ENCODE measurements at regions of chr15 and their contacts with region 1.

Region 1: DNA sequence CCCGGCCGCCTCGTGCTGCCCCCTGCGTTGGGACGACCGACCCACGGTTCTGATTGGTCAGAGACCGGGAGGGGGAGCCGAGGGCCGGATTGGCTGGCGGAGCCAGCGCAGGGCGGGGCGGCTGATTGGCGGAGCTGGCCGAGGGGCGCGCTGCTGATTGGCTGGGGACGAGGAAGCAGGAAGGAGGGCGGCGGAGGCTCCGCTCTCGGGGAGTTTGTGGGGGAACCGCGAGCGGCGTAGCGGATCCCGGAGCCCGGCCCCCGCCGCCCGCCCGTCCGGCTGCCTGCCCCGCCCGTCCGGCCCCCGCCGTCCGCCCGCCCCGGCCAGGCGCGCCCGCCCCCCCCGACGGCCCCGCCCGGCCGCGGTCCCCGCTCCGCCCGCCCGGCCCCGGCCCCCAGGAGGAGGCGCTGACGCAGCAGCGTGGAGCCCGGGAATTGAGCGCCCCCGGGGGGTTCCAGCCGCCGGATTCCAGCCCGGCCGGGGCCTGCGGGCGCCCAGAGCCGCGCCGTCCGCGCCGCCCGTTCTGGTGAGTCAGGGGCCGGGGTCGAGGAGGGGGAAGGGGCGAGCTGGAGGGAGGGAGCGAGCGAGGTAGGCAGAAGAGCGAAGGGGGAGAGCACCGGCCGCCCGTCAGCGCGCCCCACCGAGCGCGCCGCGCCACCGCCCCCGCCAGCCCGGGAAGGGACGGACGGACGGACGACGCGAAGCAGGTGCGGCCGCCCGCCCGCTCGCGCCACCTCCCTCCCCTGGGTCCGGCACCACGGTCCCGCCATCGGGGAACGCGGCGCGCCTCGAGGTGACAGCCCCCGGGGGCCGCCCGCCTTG is at the start of gene BAHD1:
- DNase-seq: peak; percentile 85 to 97 (median 89)
- ATAC-seq: peak; percentile 94
- H3K4me3 ChIP-seq: peak within 1 kb of the TSS; percentile 60
- H3K4me3 Mint-ChIP-seq: peak within 1 kb of the TSS; percentile 88 to 99 (median 94)
- H3K27ac ChIP-seq: peak within 1 kb of the TSS; percentile 77
- H3K27ac Mint-ChIP-seq: peak within 1 kb of the TSS in 8 of 9 donors; percentile 71 to 93 (median 84)
- H3K4me1 ChIP-seq: peaks cover 20 to 44% of the 10 kb centered on the region in 2 donors
- H3K4me1 Mint-ChIP-seq: peaks cover 46 to 64% (median 60%) of the 10 kb centered on the region in 7 donors
- H3K27me3 ChIP-seq: peaks cover 0 to 5% of the 10 kb centered on the region in 2 donors
- H3K27me3 Mint-ChIP-seq: peaks cover 15 to 65% (median 22%) of the 10 kb centered on the region in 5 donors
- total RNA-seq, gene BAHD1: 28.4 to 48.8 (median 31.2) TPM

Region 2: GRCh38 chr15:40382580-40383456 is 58.1 kb before region 1 on chr15 and contains the start of gene KNSTRN:
- CTCF ChIA-PET with region 1: no interaction called
- POLR2A ChIA-PET with region 1: interaction called, 4 read pairs
- intact Hi-C with region 1: loop called in 1 of 2 experiments (anchors 2 kb)
- DNase-seq: peak; percentile 78 to 93 (median 91)
- ATAC-seq: peak; percentile 100
- H3K4me3 ChIP-seq: peak within 1 kb of the TSS; percentile 70
- H3K4me3 Mint-ChIP-seq: peak within 1 kb of the TSS; percentile 92 to 99 (median 98)
- H3K27ac ChIP-seq: peak within 1 kb of the TSS; percentile 65
- H3K27ac Mint-ChIP-seq: peak within 1 kb of the TSS; percentile 63 to 95 (median 85)
- H3K4me1 ChIP-seq: peaks cover 6 to 7% of the 10 kb centered on the region in 2 donors
- H3K4me1 Mint-ChIP-seq: peaks cover 14 to 26% (median 22%) of the 10 kb centered on the region in 7 donors
- H3K27me3 ChIP-seq: no peaks in the 10 kb centered on the region
- H3K27me3 Mint-ChIP-seq: peaks cover 0 to 13% (median 0%) of the 10 kb centered on the region in 5 donors
- total RNA-seq, gene KNSTRN: 3.7 to 39.6 (median 6.2) TPM

Region 3: DNA sequence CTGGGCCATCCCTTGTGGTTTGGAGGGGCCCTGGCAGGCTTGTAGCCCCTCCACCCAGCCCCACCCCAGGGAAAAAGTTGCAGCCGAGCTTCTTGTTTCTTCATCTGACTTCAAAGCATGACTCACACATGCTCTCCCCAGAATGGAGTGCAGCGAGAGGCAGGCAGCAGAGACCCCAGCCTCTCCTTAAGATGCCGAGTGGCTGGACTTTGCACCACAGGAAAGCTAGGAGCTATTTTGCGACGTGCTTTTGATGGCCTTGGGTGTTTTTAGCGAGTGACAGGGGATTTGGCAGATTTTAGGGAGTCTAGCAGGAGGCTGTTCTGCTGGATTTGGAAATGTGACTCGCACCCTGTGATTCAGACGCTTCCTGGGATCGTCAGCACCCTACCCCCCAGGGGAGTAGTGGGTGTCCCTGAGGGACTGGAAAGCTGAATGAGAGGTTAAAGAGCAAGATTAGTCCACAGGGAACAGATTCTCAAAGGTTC is 14.0 kb after region 1 on chr15:
- CTCF ChIA-PET with region 1: interaction called, 8 read pairs
- POLR2A ChIA-PET with region 1: interaction called, 90 read pairs
- intact Hi-C with region 1: loop called in 1 of 2 experiments (anchors 1 kb)
- DNase-seq: no peak
- ATAC-seq: no peak
- H3K4me3 ChIP-seq: peak overlapping the region; percentile 16
- H3K4me3 Mint-ChIP-seq: peak overlapping the region; percentile 72 to 95 (median 86)
- H3K27ac ChIP-seq: peak overlapping the region; percentile 63
- H3K27ac Mint-ChIP-seq: peak overlapping the region; percentile 48 to 97 (median 93)
- H3K4me1 ChIP-seq: peaks cover 39 to 70% of the 10 kb centered on the region in 2 donors
- H3K4me1 Mint-ChIP-seq: peaks cover 64 to 81% (median 76%) of the 10 kb centered on the region in 7 donors
- H3K27me3 ChIP-seq: no peaks in the 10 kb centered on the region
- H3K27me3 Mint-ChIP-seq: no peaks in the 10 kb centered on the region

Region 4: GRCh38 chr15:40506964-40507571 is 66.1 kb after region 1 on chr15:
- CTCF ChIA-PET with region 1: interaction called, 14 read pairs
- POLR2A ChIA-PET with region 1: interaction called, 6 read pairs
- intact Hi-C with region 1: loop called in 1 of 2 experiments (anchors 1 kb)
- DNase-seq: peak; percentile 30 to 69 (median 52)
- ATAC-seq: peak; percentile 83
- H3K4me3 ChIP-seq: no peak overlapping the region
- H3K4me3 Mint-ChIP-seq: peak overlapping the region in 9 of 10 donors; percentile 5 to 61 (median 48)
- H3K27ac ChIP-seq: no peak overlapping the region
- H3K27ac Mint-ChIP-seq: no peak overlapping the region
- H3K4me1 ChIP-seq: peaks cover 0 to 11% of the 10 kb centered on the region in 2 donors
- H3K4me1 Mint-ChIP-seq: peaks cover 16 to 26% (median 23%) of the 10 kb centered on the region in 7 donors
- H3K27me3 ChIP-seq: peaks cover 9 to 15% of the 10 kb centered on the region in 2 donors
- H3K27me3 Mint-ChIP-seq: peaks cover 55 to 86% (median 60%) of the 10 kb centered on the region in 5 donors

Region 5: GRCh38 chr15:40593588-40594428 is 152.9 kb after region 1 on chr15 and contains the start of gene KNL1:
- CTCF ChIA-PET with region 1: no interaction called
- POLR2A ChIA-PET with region 1: no interaction called
- intact Hi-C with region 1: loop called (anchors 1 to 2 kb)
- DNase-seq: peak; percentile 83 to 94 (median 91)
- ATAC-seq: peak; percentile 85
- H3K4me3 ChIP-seq: peak within 1 kb of the TSS; percentile 98
- H3K4me3 Mint-ChIP-seq: peak within 1 kb of the TSS; percentile 91 to 99 (median 96)
- H3K27ac ChIP-seq: peak within 1 kb of the TSS; percentile 83
- H3K27ac Mint-ChIP-seq: peak within 1 kb of the TSS; percentile 91 to 100 (median 98)
- H3K4me1 ChIP-seq: peaks cover 11 to 12% of the 10 kb centered on the region in 2 donors
- H3K4me1 Mint-ChIP-seq: peaks cover 13 to 41% (median 25%) of the 10 kb centered on the region in 7 donors
- H3K27me3 ChIP-seq: no peaks in the 10 kb centered on the region
- H3K27me3 Mint-ChIP-seq: peaks cover 0 to 12% (median 6%) of the 10 kb centered on the region in 5 donors
- total RNA-seq, gene KNL1: 0.16 to 41.5 (median 1.7) TPM

Region 6: GRCh38 chr15:40754883-40755811 is 314.2 kb after region 1 on chr15 and contains the start of gene RMDN3:
- CTCF ChIA-PET with region 1: no interaction called
- POLR2A ChIA-PET with region 1: no interaction called
- intact Hi-C with region 1: loop called in 1 of 2 experiments (anchors 1 kb)
- DNase-seq: peak; percentile 89 to 97 (median 92)
- ATAC-seq: peak; percentile 99
- H3K4me3 ChIP-seq: peak within 1 kb of the TSS; percentile 94
- H3K4me3 Mint-ChIP-seq: peak within 1 kb of the TSS; percentile 90 to 98 (median 94)
- H3K27ac ChIP-seq: peak within 1 kb of the TSS; percentile 95
- H3K27ac Mint-ChIP-seq: peak within 1 kb of the TSS; percentile 89 to 99 (median 95)
- H3K4me1 ChIP-seq: peaks cover 7 to 10% of the 10 kb centered on the region in 2 donors
- H3K4me1 Mint-ChIP-seq: peaks cover 16 to 37% (median 27%) of the 10 kb centered on the region in 7 donors
- H3K27me3 ChIP-seq: no peaks in the 10 kb centered on the region
- H3K27me3 Mint-ChIP-seq: no peaks in the 10 kb centered on the region
- total RNA-seq, gene RMDN3: 19.5 to 44.0 (median 31.9) TPM

Region 7: GRCh38 chr15:40847205-40847961 is 406.4 kb after region 1 on chr15:
- CTCF ChIA-PET with region 1: no interaction called
- POLR2A ChIA-PET with region 1: no interaction called
- intact Hi-C with region 1: no loop called
- DNase-seq: no peak
- ATAC-seq: peak; percentile 85
- H3K4me3 ChIP-seq: no peak overlapping the region
- H3K4me3 Mint-ChIP-seq: peak overlapping the region in 7 of 10 donors; percentile 6 to 68 (median 28)
- H3K27ac ChIP-seq: no peak overlapping the region
- H3K27ac Mint-ChIP-seq: peak overlapping the region in 6 of 9 donors; percentile 9 to 68 (median 34)
- H3K4me1 ChIP-seq: peaks cover 0 to 15% of the 10 kb centered on the region in 2 donors
- H3K4me1 Mint-ChIP-seq: peaks cover 12 to 38% (median 32%) of the 10 kb centered on the region in 7 donors
- H3K27me3 ChIP-seq: peaks cover 0 to 3% of the 10 kb centered on the region in 2 donors
- H3K27me3 Mint-ChIP-seq: peaks cover 0 to 19% (median 4%) of the 10 kb centered on the region in 5 donors